ENCODE measurements at regions of chr4 and their contacts with region 1.

Region 1: GRCh38 chr4:170017252-170017651 is 8.9 kb downstream of the MFAP3L start:
- DNase-seq: no peak
- ATAC-seq: no peak
- H3K4me3 ChIP-seq: no peak overlapping the region
- H3K4me3 Mint-ChIP-seq: no peak overlapping the region
- H3K27ac ChIP-seq: no peak overlapping the region
- H3K27ac Mint-ChIP-seq: no peak overlapping the region
- H3K4me1 ChIP-seq: no peaks in the 10 kb centered on the region
- H3K4me1 Mint-ChIP-seq: no peaks in the 10 kb centered on the region
- H3K27me3 ChIP-seq: no peaks in the 10 kb centered on the region
- H3K27me3 Mint-ChIP-seq: no peaks in the 10 kb centered on the region
- CTCF ChIP-seq: no peak

Region 2: DNA sequence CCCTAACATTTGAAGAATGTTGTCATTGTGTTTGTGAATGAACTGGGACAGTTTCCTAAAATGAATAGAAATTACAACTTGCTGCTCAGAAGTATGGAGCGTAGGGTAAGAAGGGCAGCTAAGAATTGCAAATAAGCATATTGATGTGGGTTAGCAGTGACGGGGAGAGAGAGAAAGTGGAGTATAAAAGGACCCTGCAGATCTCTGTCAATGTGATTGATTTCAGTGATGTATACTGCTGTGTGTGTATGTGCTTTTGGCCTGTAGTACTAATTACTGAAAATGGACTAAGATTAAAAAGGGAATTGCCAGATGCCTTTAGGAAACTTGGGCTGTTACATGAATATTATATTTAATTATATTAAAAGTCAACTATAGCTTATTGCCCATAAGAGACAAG is 16.7 kb after region 1 on chr4:
- CTCF ChIA-PET with region 1: no interaction called
- POLR2A ChIA-PET with region 1: interaction called, 3 read pairs
- intact Hi-C with region 1: loop called in 1 of 2 experiments (anchors 2 kb)
- DNase-seq: no peak
- ATAC-seq: no peak
- H3K4me3 ChIP-seq: no peak overlapping the region
- H3K4me3 Mint-ChIP-seq: no peak overlapping the region
- H3K27ac ChIP-seq: no peak overlapping the region
- H3K27ac Mint-ChIP-seq: no peak overlapping the region
- H3K4me1 ChIP-seq: no peaks in the 10 kb centered on the region
- H3K4me1 Mint-ChIP-seq: no peaks in the 10 kb centered on the region
- H3K27me3 ChIP-seq: peaks cover 0 to 3% of the 10 kb centered on the region in 2 experiments
- H3K27me3 Mint-ChIP-seq: peaks cover 13% of the 10 kb centered on the region
- CTCF ChIP-seq: no peak

Measured in CD4-positive, alpha-beta T cell (primary cell).